CD4-positive, alpha-beta T cell (primary cell): ENCODE measurements at regions of chr12 and their contacts with region 1.

Region 1: GRCh38 chr12:106760184-106760531 is 14.3 kb upstream of the RIC8B start:
- DNase-seq: peak in 6 of 14 experiments; percentile 17 to 74 (median 64)
- ATAC-seq: peak; percentile 92
- H3K4me3 ChIP-seq: peak overlapping the region; percentile 26
- H3K4me3 Mint-ChIP-seq: peak overlapping the region; percentile 73
- H3K27ac ChIP-seq: peak overlapping the region; percentile 32 to 64
- H3K27ac Mint-ChIP-seq: peak overlapping the region; percentile 83
- H3K4me1 ChIP-seq: peaks cover 17% of the 10 kb centered on the region
- H3K4me1 Mint-ChIP-seq: peaks cover 33% of the 10 kb centered on the region
- H3K27me3 ChIP-seq: no peaks in the 10 kb centered on the region
- H3K27me3 Mint-ChIP-seq: no peaks in the 10 kb centered on the region
- CTCF ChIP-seq: no peak

Region 2: GRCh38 chr12:104938371-104938770 is 1821.8 kb before region 1 on chr12:
- CTCF ChIA-PET with region 1: no interaction called
- POLR2A ChIA-PET with region 1: no interaction called
- intact Hi-C with region 1: no loop called
- DNase-seq: no peak
- ATAC-seq: no peak
- H3K4me3 ChIP-seq: no peak overlapping the region
- H3K4me3 Mint-ChIP-seq: no peak overlapping the region
- H3K27ac ChIP-seq: no peak overlapping the region
- H3K27ac Mint-ChIP-seq: no peak overlapping the region
- H3K4me1 ChIP-seq: no peaks in the 10 kb centered on the region
- H3K4me1 Mint-ChIP-seq: no peaks in the 10 kb centered on the region
- H3K27me3 ChIP-seq: no peaks in the 10 kb centered on the region
- H3K27me3 Mint-ChIP-seq: no peaks in the 10 kb centered on the region
- CTCF ChIP-seq: no peak

Region 3: GRCh38 chr12:106747973-106748436 is 12.2 kb before region 1 on chr12:
- CTCF ChIA-PET with region 1: no interaction called
- POLR2A ChIA-PET with region 1: interaction called, 14 read pairs
- intact Hi-C with region 1: no loop called
- DNase-seq: peak in 7 of 14 experiments; percentile 9 to 90 (median 26)
- ATAC-seq: peak; percentile 94
- H3K4me3 ChIP-seq: no peak overlapping the region
- H3K4me3 Mint-ChIP-seq: peak overlapping the region; percentile 52
- H3K27ac ChIP-seq: peak overlapping the region; percentile 30 to 70
- H3K27ac Mint-ChIP-seq: peak overlapping the region; percentile 87
- H3K4me1 ChIP-seq: peaks cover 51% of the 10 kb centered on the region
- H3K4me1 Mint-ChIP-seq: peaks cover 28% of the 10 kb centered on the region
- H3K27me3 ChIP-seq: peaks cover 0 to 4% of the 10 kb centered on the region in 2 experiments
- H3K27me3 Mint-ChIP-seq: no peaks in the 10 kb centered on the region
- CTCF ChIP-seq: no peak

Region 4: GRCh38 chr12:106774005-106774807 is 14.0 kb after region 1 on chr12 and contains the start of gene RIC8B:
- CTCF ChIA-PET with region 1: interaction called, 3 read pairs
- POLR2A ChIA-PET with region 1: interaction called, 5 read pairs
- intact Hi-C with region 1: loop called in 1 of 2 experiments (anchors 1 kb)
- DNase-seq: peak; percentile 51 to 91 (median 72)
- ATAC-seq: peak; percentile 82
- H3K4me3 ChIP-seq: peak within 1 kb of the TSS; percentile 89
- H3K4me3 Mint-ChIP-seq: peak within 1 kb of the TSS; percentile 98
- H3K27ac ChIP-seq: peak within 1 kb of the TSS; percentile 80 to 90
- H3K27ac Mint-ChIP-seq: peak within 1 kb of the TSS; percentile 97
- H3K4me1 ChIP-seq: peaks cover 31% of the 10 kb centered on the region
- H3K4me1 Mint-ChIP-seq: peaks cover 42% of the 10 kb centered on the region
- H3K27me3 ChIP-seq: no peaks in the 10 kb centered on the region
- H3K27me3 Mint-ChIP-seq: no peaks in the 10 kb centered on the region
- CTCF ChIP-seq: no peak
- total RNA-seq, gene RIC8B: 5.5 to 9.0 TPM